Heart right ventricle (tissue), 16 donors: ENCODE measurements at regions of chr19 and their contacts with region 1.

Region 1: DNA sequence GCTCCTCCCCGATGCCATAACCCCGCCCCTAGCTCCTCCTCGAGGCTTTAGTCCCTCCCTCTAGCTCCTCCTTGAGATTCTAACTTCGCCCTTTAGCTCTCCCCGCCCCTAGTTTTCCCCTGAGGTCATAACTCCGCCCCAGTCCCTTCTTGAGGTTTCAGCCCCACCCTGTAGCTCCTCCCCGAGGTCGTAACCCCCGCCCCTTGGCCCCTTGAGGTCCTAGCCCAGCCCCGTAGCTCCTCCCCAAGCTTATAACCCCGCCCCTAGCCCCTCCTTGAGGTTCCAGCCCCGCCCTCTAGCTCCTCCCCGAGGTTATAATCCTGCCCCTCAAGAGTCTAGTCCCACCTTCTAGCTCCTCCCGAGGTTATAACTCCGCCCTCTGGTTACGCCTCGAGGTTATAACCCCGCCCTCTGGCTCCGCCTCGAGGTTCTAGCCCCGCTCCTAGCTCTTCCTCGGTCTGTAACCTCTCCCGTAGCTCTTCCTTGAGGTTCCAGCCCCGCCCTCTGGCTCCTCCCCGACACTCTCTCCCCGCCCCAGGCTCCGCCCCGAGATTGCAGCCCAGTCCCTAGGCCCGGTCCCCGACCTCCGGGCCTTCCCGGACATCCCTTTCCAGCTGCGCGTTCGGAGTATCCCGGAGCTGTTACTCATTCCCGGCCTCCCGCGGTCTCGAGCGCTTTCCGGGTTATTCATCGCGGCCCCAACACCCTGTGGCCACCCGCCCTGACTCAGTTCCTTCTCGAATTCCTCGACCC is 1.4 kb downstream of the PLAUR start:
- DNase-seq: peak; percentile 98 to 99
- ATAC-seq: peak; percentile 90 to 97 (median 93)
- H3K4me3 ChIP-seq: peak overlapping the region; percentile 26 to 78 (median 66)
- H3K27ac ChIP-seq: peak overlapping the region; percentile 64 to 99 (median 91)
- H3K4me1 ChIP-seq: peaks cover 0 to 83% (median 30%) of the 10 kb centered on the region in 9 donors
- H3K27me3 ChIP-seq: no peaks in the 10 kb centered on the region
- CTCF ChIP-seq: no peak

Region 2: GRCh38 chr19:43532962-43533545 is 135.5 kb before region 1 on chr19 and contains the start of gene ZNF575:
- intact Hi-C with region 1: loop called in 3 of 10 experiments (anchors 1 to 10 kb)
- DNase-seq: peak; percentile 89 to 94
- ATAC-seq: peak; percentile 72 to 88 (median 80)
- H3K4me3 ChIP-seq: peak within 1 kb of the TSS; percentile 48 to 74 (median 61)
- H3K27ac ChIP-seq: peak within 1 kb of the TSS; percentile 66 to 96 (median 89)
- H3K4me1 ChIP-seq: peaks cover 0 to 35% (median 12%) of the 10 kb centered on the region in 9 donors
- H3K27me3 ChIP-seq: no peaks in the 10 kb centered on the region
- CTCF ChIP-seq: peak in 2 of 9 donors; percentile 7 to 13
- total RNA-seq, gene ZNF575: 0.45 to 2.0 (median 1.3) TPM

Region 3: GRCh38 chr19:43619262-43620060 is 49.1 kb before region 1 on chr19 and contains the start of gene ZNF428:
- intact Hi-C with region 1: no loop called
- DNase-seq: peak; percentile 85 to 86
- ATAC-seq: peak; percentile 94 to 97 (median 95)
- H3K4me3 ChIP-seq: peak within 1 kb of the TSS; percentile 59 to 90 (median 80)
- H3K27ac ChIP-seq: peak within 1 kb of the TSS; percentile 84 to 97 (median 94)
- H3K4me1 ChIP-seq: peaks cover 0 to 24% (median 7%) of the 10 kb centered on the region in 9 donors
- H3K27me3 ChIP-seq: no peaks in the 10 kb centered on the region
- CTCF ChIP-seq: no peak
- total RNA-seq, gene ZNF428: 28.1 to 37.6 (median 32.9) TPM

Region 4: DNA sequence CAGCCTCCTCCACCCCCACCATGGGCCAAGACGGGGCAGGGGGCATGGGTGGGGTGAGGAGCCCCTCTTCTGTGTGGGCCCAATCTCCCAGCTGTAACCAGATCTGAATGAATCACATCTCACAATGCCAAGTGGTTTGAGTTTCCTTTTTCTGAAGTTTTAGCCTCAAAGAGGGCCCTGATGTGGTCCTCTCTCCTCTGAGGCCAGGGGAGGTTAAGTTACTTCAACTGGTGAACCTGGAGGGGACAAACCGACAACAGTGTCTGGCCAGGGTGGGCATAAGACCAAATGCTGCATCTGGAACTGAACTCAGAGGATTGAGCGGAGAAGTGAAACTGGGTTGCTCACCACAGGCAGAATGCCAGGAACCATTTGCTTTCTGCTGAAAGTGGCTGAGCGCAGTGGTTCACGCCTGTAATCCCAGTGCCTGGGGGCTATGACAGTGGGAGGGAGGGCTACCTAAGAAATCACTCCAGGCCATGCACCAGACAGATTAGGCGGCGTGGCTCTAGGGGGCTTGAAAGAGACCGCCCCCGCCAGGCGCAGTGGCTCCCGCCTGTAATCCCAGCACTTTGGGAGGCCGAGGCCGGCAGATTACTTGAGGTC is 31.9 kb after region 1 on chr19:
- intact Hi-C with region 1: loop called in 1 of 10 experiments (anchors 2 kb)
- DNase-seq: peak; percentile 30 to 76
- ATAC-seq: peak; percentile 57 to 85 (median 69)
- H3K4me3 ChIP-seq: peak overlapping the region in 8 of 10 donors; percentile 11 to 50 (median 38)
- H3K27ac ChIP-seq: peak overlapping the region; percentile 54 to 94 (median 87)
- H3K4me1 ChIP-seq: peaks cover 4 to 35% (median 18%) of the 10 kb centered on the region in 9 donors
- H3K27me3 ChIP-seq: peaks cover 0 to 21% (median 8%) of the 10 kb centered on the region in 7 donors
- CTCF ChIP-seq: no peak

Region 5: DNA sequence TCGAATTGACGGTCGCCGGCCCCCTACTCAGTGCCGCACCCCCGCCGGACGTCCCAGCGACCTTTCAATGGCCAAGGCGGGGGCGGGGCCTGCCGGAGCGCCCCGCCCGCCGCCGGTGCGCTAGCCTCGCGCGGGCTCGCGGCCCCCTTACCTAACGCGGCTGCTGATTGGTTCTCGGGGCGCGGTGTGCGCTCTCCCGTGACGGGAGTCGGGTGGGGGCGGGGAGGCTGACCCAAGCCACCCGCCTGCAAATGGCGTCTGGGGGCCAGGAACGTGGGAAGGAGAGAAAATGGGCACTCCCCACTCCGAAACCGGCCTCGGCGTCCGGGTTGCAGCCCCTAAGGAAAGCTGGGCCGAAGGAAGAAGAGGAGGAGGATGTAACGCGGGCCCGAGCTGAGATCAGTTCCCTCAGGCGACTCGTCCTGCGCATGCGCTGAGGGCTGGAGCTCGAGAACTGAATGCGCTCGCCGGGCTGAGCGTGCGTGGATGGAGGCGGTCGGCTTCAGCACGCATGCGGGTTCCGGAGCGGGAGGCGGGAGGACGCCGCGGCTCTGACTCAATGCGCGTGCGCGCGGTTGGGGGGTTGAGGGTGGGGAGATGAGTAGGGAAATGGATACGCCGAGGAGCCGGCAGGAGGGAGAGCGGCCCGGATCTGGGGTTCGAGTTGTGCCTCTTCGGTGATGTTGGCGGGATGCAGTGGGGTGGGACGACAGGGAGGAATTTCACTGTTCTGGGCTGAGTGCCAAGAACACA is 86.1 kb after region 1 on chr19 and contains the start of gene SMG9:
- intact Hi-C with region 1: loop called in 1 of 10 experiments (anchors 1 kb)
- DNase-seq: peak; percentile 98 to 100
- ATAC-seq: peak; percentile 93 to 98 (median 96)
- H3K4me3 ChIP-seq: peak within 1 kb of the TSS; percentile 46 to 89 (median 75)
- H3K27ac ChIP-seq: peak within 1 kb of the TSS; percentile 88 to 100 (median 98)
- H3K4me1 ChIP-seq: peaks cover 0 to 64% (median 22%) of the 10 kb centered on the region in 9 donors
- H3K27me3 ChIP-seq: no peaks in the 10 kb centered on the region
- CTCF ChIP-seq: no peak
- total RNA-seq, gene SMG9: 10.0 to 19.4 (median 13.3) TPM